ENCODE measurements at regions of chr3 and their contacts with region 1.

Region 1: GRCh38 chr3:158109804-158110657 is at the start of gene RSRC1:
- DNase-seq: peak; percentile 55
- ATAC-seq: peak; percentile 91
- H3K4me3 ChIP-seq: peak within 1 kb of the TSS; percentile 79
- H3K27ac ChIP-seq: peak within 1 kb of the TSS; percentile 80
- H3K4me1 ChIP-seq: 0 out of 2 replicates have a peak, but pooled peaks cover 4% of the 10 kb centered on the region
- H3K27me3 ChIP-seq: peaks cover 6 to 8% of the 10 kb centered on the region in 2 experiments; a peak in 2 of 4 replicates
- CTCF ChIP-seq: no peak
- EP300 ChIP-seq: no peak
- POLR2A ChIP-seq: peak; percentile 84
- RAD21 ChIP-seq: peak; percentile 28; the same call in 1 of the 2 replicates
- polyA plus RNA-seq, gene RSRC1: 47.6 to 83.3 TPM

Region 2: DNA sequence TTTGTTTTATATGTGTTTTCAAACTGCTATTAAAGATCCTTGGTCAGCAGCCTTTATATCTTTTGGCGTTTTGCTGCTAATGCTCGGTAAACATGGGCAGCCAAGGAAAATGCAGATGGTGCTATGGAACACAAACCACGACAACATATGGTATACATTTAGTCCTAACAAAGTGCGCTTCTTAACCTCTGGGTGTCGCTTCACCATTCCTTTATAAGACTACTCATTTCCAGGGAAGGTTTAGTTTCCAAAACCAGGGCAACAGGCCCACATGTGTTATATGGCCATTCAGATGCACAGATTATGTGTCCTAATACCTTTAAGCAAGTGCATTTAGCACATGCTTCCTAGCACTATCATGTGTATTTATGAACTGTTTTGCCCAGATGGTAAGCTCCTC is 18.5 kb before region 1 on chr3:
- CTCF ChIA-PET with region 1: interaction called, 12 read pairs
- POLR2A ChIA-PET with region 1: interaction called, 4 read pairs
- RAD21 ChIA-PET with region 1: interaction called, 19 read pairs
- SMC1A ChIA-PET with region 1: interaction called, 20 read pairs
- in situ Hi-C with region 1: no loop called
- intact Hi-C with region 1: no loop called
- DNase-seq: no peak
- ATAC-seq: no peak
- H3K4me3 ChIP-seq: no peak overlapping the region
- H3K27ac ChIP-seq: no peak overlapping the region
- H3K4me1 ChIP-seq: no peaks in the 10 kb centered on the region
- H3K27me3 ChIP-seq: peaks cover 2 to 12% of the 10 kb centered on the region in 2 experiments
- CTCF ChIP-seq: no peak; a peak in 1 of 6 replicates
- EP300 ChIP-seq: no peak
- POLR2A ChIP-seq: no peak
- RAD21 ChIP-seq: 0 out of 2 replicates have a peak, but pooled peaks have one; percentile 2

Region 3: DNA sequence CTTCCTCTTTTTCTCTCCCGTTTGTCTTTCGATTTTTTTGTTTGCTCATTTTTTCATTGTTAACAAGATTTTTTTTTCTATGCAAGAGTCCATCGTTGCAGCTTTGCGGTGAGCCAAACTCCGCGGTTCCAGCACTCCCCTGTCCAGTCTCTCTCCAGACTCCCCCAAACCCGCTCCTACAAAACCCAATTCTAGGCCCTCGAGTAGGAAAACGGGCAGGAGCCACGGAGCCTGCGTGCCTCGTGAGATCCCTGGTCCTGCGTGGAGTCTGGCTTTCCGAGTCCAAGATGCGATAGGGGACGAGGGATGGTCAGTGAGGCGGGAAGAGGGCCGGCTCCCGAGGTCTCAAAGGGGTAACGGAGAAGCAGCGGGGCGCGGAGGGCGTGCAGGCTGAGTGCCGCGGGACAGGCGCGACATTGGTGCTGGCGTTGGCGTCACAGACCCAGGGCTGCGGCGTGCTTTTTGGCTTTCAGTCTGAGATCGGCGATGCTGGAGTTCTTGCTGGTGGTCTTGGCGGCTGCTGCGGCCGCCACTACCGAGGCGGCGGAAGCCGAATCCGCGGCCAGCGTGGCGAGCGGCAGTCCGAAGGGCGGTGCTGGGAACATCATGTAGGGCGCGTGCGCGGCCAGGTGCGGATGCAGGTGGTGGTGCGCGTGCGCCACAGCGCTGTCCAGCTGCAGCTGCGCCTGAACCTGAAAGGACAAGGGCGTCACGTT is 12.3 kb before region 1 on chr3:
- CTCF ChIA-PET with region 1: interaction called, 12 read pairs
- POLR2A ChIA-PET with region 1: interaction called, 4 read pairs
- RAD21 ChIA-PET with region 1: interaction called, 19 read pairs
- SMC1A ChIA-PET with region 1: interaction called, 20 read pairs
- in situ Hi-C with region 1: no loop called
- intact Hi-C with region 1: no loop called
- DNase-seq: peak; percentile 54
- ATAC-seq: peak; percentile 95
- H3K4me3 ChIP-seq: peak overlapping the region; percentile 85
- H3K27ac ChIP-seq: no peak overlapping the region
- H3K4me1 ChIP-seq: peaks cover 6% of the 10 kb centered on the region; the same call in 1 of the 2 replicates
- H3K27me3 ChIP-seq: peaks cover 2 to 20% of the 10 kb centered on the region in 2 experiments
- CTCF ChIP-seq: no peak
- EP300 ChIP-seq: no peak
- POLR2A ChIP-seq: peak; percentile 69
- RAD21 ChIP-seq: no peak

Region 4: DNA sequence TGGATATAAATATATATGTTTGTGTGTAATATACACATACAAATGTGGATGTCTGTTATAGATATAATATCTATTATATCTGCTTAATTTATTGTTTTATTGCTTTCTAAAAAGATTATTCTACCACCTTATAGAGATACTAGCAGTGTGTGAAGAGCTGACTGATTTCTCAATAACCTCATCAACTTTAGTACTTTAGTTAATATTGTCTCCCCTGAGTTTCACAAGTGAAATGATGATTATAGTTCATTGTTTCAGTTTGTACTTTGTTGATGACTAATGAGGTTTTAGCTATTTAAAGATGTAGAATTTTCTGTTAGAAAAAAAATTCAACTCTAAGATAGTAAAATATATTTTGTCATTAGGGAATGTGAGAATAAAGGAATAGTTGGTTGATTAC is 11.3 kb after region 1 on chr3:
- CTCF ChIA-PET with region 1: interaction called, 15 read pairs
- POLR2A ChIA-PET with region 1: interaction called, 4 read pairs
- RAD21 ChIA-PET with region 1: interaction called, 6 read pairs
- SMC1A ChIA-PET with region 1: interaction called, 7 read pairs
- in situ Hi-C with region 1: no loop called
- intact Hi-C with region 1: no loop called
- DNase-seq: no peak
- ATAC-seq: peak; percentile 89
- H3K4me3 ChIP-seq: no peak overlapping the region
- H3K27ac ChIP-seq: no peak overlapping the region
- H3K4me1 ChIP-seq: no peaks in the 10 kb centered on the region
- H3K27me3 ChIP-seq: no peaks in the 10 kb centered on the region
- CTCF ChIP-seq: no peak
- EP300 ChIP-seq: 0 out of 4 replicates have a peak, but pooled peaks of 1 of the 2 experiments have one; percentile 19
- POLR2A ChIP-seq: no peak
- RAD21 ChIP-seq: no peak

Region 5: GRCh38 chr3:158644345-158644908 is 534.4 kb after region 1 on chr3 and contains the start of gene GFM1:
- CTCF ChIA-PET with region 1: no interaction called
- POLR2A ChIA-PET with region 1: no interaction called
- RAD21 ChIA-PET with region 1: no interaction called
- SMC1A ChIA-PET with region 1: interaction called, 4 read pairs
- in situ Hi-C with region 1: no loop called
- intact Hi-C with region 1: loop called (anchors 10 kb)
- DNase-seq: peak; percentile 83
- ATAC-seq: peak; percentile 97
- H3K4me3 ChIP-seq: peak within 1 kb of the TSS; percentile 72
- H3K27ac ChIP-seq: peak within 1 kb of the TSS; percentile 75
- H3K4me1 ChIP-seq: no peaks in the 10 kb centered on the region
- H3K27me3 ChIP-seq: no peaks in the 10 kb centered on the region
- CTCF ChIP-seq: peak; percentile 96 to 99 (median 98); a peak in 5 of 6 replicates
- EP300 ChIP-seq: 0 out of 4 replicates have a peak, but pooled peaks of 1 of the 2 experiments have one; percentile 33
- POLR2A ChIP-seq: peak; percentile 95
- RAD21 ChIP-seq: no peak
- polyA plus RNA-seq, gene GFM1: 36.9 to 43.1 TPM